Activated B cell treated with CpG ODN at 0.5 μM for 24 hours (primary cell): ENCODE measurements at regions of chr4 and their contacts with region 1.

Region 1: GRCh38 chr4:150960818-150961217 is 54.3 kb downstream of the LRBA start:
- DNase-seq: no peak
- ATAC-seq: no peak
- H3K4me3 Mint-ChIP-seq: no peak overlapping the region
- H3K27ac Mint-ChIP-seq: no peak overlapping the region
- H3K4me1 Mint-ChIP-seq: peaks cover 17% of the 10 kb centered on the region
- H3K27me3 Mint-ChIP-seq: no peaks in the 10 kb centered on the region
- CTCF ChIP-seq: no peak

Region 2: DNA sequence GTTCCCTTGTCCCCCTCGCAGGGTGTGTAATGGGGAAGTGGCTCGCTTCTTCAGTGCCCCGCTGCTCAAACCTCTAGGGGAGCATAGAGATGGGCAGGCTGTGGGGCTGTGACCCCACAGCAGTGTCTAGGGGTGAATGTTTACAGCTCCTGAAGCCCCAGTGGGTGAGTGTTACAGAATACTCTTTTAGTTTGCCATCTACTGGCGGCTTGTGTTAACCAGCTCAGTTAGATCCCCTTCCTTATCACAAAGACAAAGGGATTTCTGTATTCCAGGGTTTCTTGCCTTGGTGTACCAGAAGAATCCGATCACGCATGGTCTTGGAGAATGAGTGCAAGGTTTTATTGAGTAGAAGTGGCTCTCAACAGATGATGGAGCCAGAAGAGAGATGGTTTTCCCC is 1037.1 kb before region 1 on chr4:
- CTCF ChIA-PET with region 1: no interaction called
- POLR2A ChIA-PET with region 1: no interaction called
- intact Hi-C with region 1: no loop called
- DNase-seq: no peak
- ATAC-seq: no peak
- H3K4me3 Mint-ChIP-seq: no peak overlapping the region
- H3K27ac Mint-ChIP-seq: no peak overlapping the region
- H3K4me1 Mint-ChIP-seq: no peaks in the 10 kb centered on the region
- H3K27me3 Mint-ChIP-seq: no peaks in the 10 kb centered on the region
- CTCF ChIP-seq: no peak

Region 3: DNA sequence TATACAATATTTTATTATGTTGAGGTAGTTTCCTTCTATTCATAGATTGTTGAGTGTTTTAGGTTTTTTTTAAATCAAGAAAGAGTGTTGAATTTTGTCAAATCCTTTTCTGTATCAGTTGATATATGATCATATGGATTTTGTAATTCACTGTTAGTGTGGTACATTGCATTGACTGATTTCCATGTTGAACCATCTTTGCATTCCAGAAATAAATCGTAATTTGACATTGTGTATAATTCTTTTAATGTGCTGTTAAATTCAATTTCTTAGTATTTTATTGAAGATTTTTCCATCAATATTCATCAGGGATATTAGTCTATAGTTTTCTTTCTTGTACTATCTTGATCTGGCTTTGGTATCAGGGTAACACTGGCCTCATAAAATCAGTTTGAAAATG is 49.5 kb before region 1 on chr4:
- CTCF ChIA-PET with region 1: no interaction called
- POLR2A ChIA-PET with region 1: no interaction called
- intact Hi-C with region 1: loop called (anchors 5 kb)
- DNase-seq: no peak
- ATAC-seq: no peak
- H3K4me3 Mint-ChIP-seq: no peak overlapping the region
- H3K27ac Mint-ChIP-seq: no peak overlapping the region
- H3K4me1 Mint-ChIP-seq: peaks cover 3% of the 10 kb centered on the region
- H3K27me3 Mint-ChIP-seq: no peaks in the 10 kb centered on the region
- CTCF ChIP-seq: no peak

Region 4: DNA sequence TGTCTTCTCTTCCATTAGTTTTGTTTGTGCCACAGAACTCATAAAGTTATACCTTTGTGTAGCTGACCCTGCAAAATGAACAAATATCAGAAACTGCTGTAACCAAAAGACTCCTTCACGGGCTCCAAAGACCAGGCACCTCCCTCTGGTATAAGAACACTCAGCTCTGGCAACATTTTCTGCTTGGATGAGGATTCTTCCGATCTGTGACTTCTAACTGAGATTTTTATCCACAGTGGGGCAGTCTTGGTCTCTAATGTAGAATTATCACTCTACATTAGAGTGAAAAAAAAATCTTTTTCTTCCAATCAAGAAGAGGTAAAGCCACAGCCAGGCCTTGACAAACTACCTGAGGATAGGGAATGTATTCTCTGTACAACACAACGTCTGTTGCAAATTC is 277.7 kb after region 1 on chr4:
- CTCF ChIA-PET with region 1: no interaction called
- POLR2A ChIA-PET with region 1: no interaction called
- intact Hi-C with region 1: no loop called
- DNase-seq: no peak
- ATAC-seq: no peak
- H3K4me3 Mint-ChIP-seq: no peak overlapping the region
- H3K27ac Mint-ChIP-seq: no peak overlapping the region
- H3K4me1 Mint-ChIP-seq: no peaks in the 10 kb centered on the region
- H3K27me3 Mint-ChIP-seq: peaks cover 12% of the 10 kb centered on the region
- CTCF ChIP-seq: no peak

Region 5: GRCh38 chr4:151260526-151260925 is 299.7 kb after region 1 on chr4:
- CTCF ChIA-PET with region 1: no interaction called
- POLR2A ChIA-PET with region 1: no interaction called
- intact Hi-C with region 1: no loop called
- DNase-seq: no peak
- ATAC-seq: no peak
- H3K4me3 Mint-ChIP-seq: no peak overlapping the region
- H3K27ac Mint-ChIP-seq: no peak overlapping the region
- H3K4me1 Mint-ChIP-seq: no peaks in the 10 kb centered on the region
- H3K27me3 Mint-ChIP-seq: peaks cover 2% of the 10 kb centered on the region
- CTCF ChIP-seq: no peak